Right ventricle myocardium inferior (tissue), 1 donor: ENCODE measurements at regions of chrX and their contacts with region 1.

Region 1: GRCh38 chrX:132292793-132293192 is 73.5 kb upstream of the RAP2C start:
- DNase-seq: no peak
- ATAC-seq: peak; percentile 56

Region 2: GRCh38 chrX:132226169-132226568 is 66.6 kb before region 1 on chrX:
- intact Hi-C with region 1: loop called (anchors 5 kb)
- DNase-seq: no peak
- ATAC-seq: no peak

Region 3: DNA sequence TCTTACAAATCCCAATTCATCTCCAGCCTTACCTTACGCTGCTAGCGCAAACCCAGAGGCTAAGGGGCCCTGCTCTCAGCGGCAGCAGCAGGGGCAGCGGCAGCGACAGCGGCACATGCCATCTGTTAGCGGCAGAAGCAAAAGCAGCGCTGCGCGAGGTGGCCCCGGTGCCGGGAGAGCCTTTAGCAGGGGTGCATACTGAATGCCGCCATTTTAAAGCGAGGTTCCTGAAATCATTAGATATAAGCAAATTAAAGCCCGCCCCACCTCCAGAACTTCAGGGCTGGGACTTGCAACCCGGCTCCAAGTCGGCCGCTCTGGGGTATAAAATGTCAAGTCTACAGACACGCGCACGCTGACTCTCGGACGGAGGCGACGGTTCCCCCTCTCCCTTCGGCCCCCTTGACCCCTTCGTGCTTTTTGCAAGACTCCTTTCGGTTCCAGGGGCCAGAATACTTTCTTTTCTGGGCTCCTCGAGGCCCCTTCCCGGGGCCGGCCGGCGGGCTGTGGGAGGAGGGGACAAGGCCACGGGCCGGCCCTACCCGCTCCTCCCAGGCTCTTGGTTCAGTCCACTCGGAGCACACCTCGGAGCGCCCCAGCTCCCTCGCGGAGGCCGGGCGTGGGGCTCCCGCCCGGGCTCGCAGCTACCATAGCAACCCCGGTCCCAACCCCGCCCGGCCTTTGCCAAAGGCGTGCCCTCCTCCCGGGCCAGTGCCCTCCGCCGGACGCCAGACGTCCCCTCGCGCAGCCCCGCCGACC is 196.2 kb after region 1 on chrX and contains the start of gene MBNL3:
- intact Hi-C with region 1: loop called (anchors 10 kb)
- DNase-seq: peak; percentile 86
- ATAC-seq: peak; percentile 93
- total RNA-seq, gene MBNL3: 27.5 TPM

Region 4: GRCh38 chrX:132615391-132616131 is 322.8 kb after region 1 on chrX:
- intact Hi-C with region 1: loop called (anchors 5 kb)
- DNase-seq: no peak
- ATAC-seq: no peak